Calu3 (cell line): ENCODE measurements at regions of chr1 and their contacts with region 1.

Region 1: GRCh38 chr1:181142096-181142958 is 53.8 kb downstream of the IER5 start:
- DNase-seq: peak; percentile 96
- H3K4me3 Mint-ChIP-seq: peak overlapping the region; percentile 33
- H3K27ac Mint-ChIP-seq: peak overlapping the region; percentile 33
- H3K4me1 Mint-ChIP-seq: peaks cover 53% of the 10 kb centered on the region
- H3K27me3 Mint-ChIP-seq: peaks cover 30% of the 10 kb centered on the region
- CTCF ChIP-seq: peak; percentile 96

Region 2: DNA sequence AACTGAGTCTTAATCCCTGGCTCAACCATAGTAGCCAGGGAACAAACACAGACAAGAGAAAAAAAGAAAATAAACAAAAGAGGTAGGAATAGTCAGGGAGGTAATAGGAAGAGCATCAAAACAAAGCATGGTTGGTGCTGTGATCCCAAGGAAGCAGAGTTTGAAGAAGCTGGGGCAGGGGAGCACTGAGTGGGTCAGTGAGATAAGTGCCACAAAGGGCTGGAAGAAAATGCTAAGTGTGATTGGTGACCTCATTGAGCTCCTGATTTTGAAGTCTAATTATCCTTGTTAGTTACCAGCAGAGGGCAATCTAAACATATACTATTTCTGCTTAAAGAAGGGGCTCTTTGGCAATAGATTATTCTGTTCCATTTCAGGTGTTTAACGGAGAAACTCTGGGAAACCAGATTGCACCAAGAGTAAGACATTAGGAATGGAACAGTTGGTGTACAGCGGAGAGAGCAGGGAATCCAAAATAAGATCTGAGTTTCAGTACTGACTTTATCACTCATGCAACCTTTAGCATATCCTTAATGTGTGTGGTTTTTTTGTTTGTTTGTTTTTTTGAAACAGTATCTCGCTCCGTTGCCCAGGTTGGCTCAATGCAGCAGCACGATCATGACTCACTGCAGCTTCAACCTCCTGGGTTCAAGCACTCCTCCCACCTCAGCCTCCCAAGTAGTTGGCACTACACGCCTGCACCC is 260.4 kb before region 1 on chr1:
- CTCF ChIA-PET with region 1: interaction called, 23 read pairs
- intact Hi-C with region 1: loop called (anchors 1 kb)
- DNase-seq: no peak
- H3K4me3 Mint-ChIP-seq: no peak overlapping the region
- H3K27ac Mint-ChIP-seq: no peak overlapping the region
- H3K4me1 Mint-ChIP-seq: no peaks in the 10 kb centered on the region
- H3K27me3 Mint-ChIP-seq: no peaks in the 10 kb centered on the region
- CTCF ChIP-seq: no peak

Region 3: DNA sequence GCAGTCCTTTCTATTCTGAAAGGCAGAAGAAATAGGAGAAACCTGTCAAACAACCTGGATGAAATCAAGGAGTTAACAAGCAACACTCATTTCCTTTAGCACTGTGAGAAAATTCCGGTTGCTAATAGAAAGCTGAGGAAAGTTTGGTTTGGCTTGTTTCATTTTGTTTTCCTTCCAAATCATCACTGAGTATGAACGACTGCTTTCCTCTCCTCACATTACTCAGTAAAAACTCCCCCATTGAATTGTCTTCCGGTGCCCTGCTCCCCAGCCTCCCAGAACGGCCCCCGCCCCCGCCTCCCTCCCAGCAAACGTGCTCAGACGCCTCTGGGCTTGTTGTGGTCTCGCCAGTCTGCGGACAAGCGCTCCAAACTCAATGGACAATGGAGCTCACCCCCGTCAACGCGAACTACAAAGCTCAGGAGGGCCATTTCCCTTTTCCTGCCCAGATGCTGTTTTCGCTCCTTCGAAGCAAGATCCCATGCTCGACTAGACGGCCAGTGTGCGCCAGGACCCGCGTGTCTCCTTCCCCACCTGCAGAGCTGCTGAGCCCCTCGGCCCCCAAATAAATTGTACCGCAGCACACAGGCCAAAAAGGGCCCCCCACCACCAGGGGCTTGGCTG is 120.4 kb before region 1 on chr1:
- CTCF ChIA-PET with region 1: interaction called, 5 read pairs
- intact Hi-C with region 1: loop called (anchors 5 kb)
- DNase-seq: peak; percentile 60
- H3K4me3 Mint-ChIP-seq: peak overlapping the region; percentile 92
- H3K27ac Mint-ChIP-seq: peak overlapping the region; percentile 100
- H3K4me1 Mint-ChIP-seq: peaks cover 28% of the 10 kb centered on the region
- H3K27me3 Mint-ChIP-seq: peaks cover 37% of the 10 kb centered on the region
- CTCF ChIP-seq: no peak

Region 4: DNA sequence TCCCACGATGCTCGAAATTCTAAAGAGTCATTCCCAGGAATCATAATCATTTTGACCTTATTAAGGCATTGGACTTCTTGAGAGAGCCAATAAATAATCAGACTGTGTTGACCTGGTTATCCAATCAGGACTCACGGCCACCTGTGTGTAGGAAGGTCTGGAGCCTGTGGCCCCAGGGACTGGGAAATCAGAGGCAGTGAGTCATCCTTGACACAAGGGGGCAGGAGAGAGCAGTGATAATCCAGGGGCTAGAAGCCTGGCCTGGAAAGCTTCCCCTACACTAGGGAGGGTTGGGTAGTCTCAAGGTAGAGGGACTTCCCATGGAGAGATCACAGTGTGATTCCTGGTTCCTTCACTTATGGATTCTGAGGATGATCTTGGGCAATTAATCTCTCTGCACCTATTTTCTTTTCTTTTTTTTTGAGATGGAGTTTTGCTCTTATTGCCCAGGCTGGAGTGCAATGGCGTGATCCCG is 103.9 kb before region 1 on chr1:
- CTCF ChIA-PET with region 1: interaction called, 10 read pairs
- intact Hi-C with region 1: loop called (anchors 1 kb)
- DNase-seq: peak; percentile 77
- H3K4me3 Mint-ChIP-seq: no peak overlapping the region
- H3K27ac Mint-ChIP-seq: no peak overlapping the region
- H3K4me1 Mint-ChIP-seq: peaks cover 12% of the 10 kb centered on the region
- H3K27me3 Mint-ChIP-seq: no peaks in the 10 kb centered on the region
- CTCF ChIP-seq: peak; percentile 73

Region 5: DNA sequence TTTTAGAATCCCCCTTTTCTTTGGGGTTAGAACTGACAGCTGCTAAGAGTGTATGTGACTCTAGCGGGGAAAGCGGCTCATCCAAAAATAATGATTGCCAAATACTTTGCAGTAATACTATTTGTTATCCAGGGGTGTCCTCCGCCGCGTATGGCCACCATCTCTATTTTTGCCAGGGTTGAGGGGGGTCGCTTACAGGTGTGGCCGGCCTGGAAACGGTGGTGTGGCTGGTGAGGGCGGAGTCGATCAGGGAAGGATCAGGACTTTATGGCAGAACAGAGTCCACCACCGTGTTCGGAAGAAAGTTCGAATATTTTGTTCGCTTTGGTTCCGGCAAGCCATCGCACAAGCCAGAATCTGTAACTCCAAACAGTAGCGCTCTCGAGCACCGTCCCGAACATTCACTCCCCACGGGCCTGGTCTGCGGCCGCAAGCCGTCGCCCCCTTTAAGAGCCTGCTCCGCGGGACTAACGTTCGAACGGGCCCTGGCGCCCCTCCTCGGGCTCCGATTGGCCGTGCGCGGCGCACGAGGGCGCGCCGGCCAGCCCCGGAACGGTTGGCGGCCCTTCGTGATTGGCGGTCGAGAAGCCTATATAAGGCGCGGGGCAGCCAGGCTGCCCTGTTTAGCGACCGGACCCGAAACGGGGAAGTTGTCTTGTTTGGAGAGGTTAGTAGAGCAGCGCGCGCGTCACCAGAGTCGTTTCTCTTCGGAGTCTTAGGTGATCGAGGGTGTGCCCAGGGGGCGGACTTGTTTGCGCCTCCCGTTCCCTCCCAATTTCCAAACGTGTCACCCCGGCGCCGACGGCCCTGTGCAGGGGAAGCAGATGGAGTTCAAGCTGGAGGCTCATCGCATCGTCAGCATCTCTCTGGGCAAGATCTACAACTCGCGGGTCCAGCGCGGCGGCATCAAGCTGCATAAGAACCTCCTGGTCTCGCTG is 54.0 kb before region 1 on chr1 and contains the start of gene IER5:
- CTCF ChIA-PET with region 1: interaction called, 40 read pairs
- intact Hi-C with region 1: loop called (anchors 1 kb)
- DNase-seq: peak; percentile 97
- H3K4me3 Mint-ChIP-seq: peak within 1 kb of the TSS; percentile 93
- H3K27ac Mint-ChIP-seq: peak within 1 kb of the TSS; percentile 97
- H3K4me1 Mint-ChIP-seq: peaks cover 26% of the 10 kb centered on the region
- H3K27me3 Mint-ChIP-seq: no peaks in the 10 kb centered on the region
- CTCF ChIP-seq: no peak
- total RNA-seq, gene IER5: 11.4 and 12.2 TPM in 2 replicates

Region 6: GRCh38 chr1:181105134-181106021 is 36.9 kb before region 1 on chr1:
- CTCF ChIA-PET with region 1: interaction called, 13 read pairs
- intact Hi-C with region 1: no loop called
- DNase-seq: peak; percentile 96
- H3K4me3 Mint-ChIP-seq: peak overlapping the region; percentile 75
- H3K27ac Mint-ChIP-seq: peak overlapping the region; percentile 81
- H3K4me1 Mint-ChIP-seq: peaks cover 43% of the 10 kb centered on the region
- H3K27me3 Mint-ChIP-seq: peaks cover 24% of the 10 kb centered on the region
- CTCF ChIP-seq: no peak

Region 7: DNA sequence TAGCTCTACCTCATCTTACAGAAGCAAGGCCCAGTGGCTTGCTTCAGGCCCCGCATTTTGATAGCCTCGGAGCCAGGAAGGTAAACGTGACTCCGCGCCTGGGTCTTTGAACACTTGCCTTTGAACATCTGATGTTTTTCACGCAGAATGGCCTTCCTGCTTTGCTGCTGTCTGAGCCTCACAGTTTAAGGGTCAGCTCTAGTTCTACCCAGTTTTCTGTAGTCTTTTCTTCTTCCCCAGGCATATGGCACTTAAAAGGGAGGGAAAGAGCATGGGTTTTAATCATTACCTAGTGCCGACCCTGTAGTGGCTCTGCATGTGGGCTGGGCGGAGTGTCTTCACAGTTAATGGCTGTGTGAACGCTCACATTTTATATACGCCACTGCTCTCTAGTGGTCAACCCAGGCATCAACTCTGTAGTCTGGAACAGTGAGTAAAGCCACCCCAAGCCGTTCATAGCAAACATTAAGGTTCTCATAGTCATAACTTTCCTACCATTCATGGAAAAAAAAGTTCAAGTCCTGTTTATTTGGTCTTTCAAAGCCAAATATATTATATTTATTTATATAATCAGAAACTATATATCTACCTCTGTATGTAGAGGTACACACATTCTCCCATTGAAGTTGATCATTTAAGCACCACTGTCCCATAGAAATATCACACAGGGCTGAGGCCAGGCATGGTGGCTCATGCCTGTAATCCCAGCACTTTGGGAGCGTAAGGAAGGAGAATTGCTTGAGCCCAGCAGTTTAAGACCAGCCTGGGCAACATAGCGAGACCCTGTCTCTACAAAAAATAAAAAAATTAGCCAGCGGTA is 24.3 kb after region 1 on chr1:
- CTCF ChIA-PET with region 1: interaction called, 5 read pairs
- intact Hi-C with region 1: loop called (anchors 1 kb)
- DNase-seq: peak; percentile 83
- H3K4me3 Mint-ChIP-seq: no peak overlapping the region
- H3K27ac Mint-ChIP-seq: no peak overlapping the region
- H3K4me1 Mint-ChIP-seq: no peaks in the 10 kb centered on the region
- H3K27me3 Mint-ChIP-seq: peaks cover 34% of the 10 kb centered on the region
- CTCF ChIP-seq: peak; percentile 91

Region 8: GRCh38 chr1:181219938-181220337 is 77.6 kb after region 1 on chr1:
- CTCF ChIA-PET with region 1: no interaction called
- intact Hi-C with region 1: no loop called
- DNase-seq: no peak
- H3K4me3 Mint-ChIP-seq: no peak overlapping the region
- H3K27ac Mint-ChIP-seq: no peak overlapping the region
- H3K4me1 Mint-ChIP-seq: no peaks in the 10 kb centered on the region
- H3K27me3 Mint-ChIP-seq: peaks cover 60% of the 10 kb centered on the region
- CTCF ChIP-seq: no peak